Colonic mucosa (tissue), 4 donors: ENCODE measurements at regions of chr7 and their contacts with region 1.

Region 1: DNA sequence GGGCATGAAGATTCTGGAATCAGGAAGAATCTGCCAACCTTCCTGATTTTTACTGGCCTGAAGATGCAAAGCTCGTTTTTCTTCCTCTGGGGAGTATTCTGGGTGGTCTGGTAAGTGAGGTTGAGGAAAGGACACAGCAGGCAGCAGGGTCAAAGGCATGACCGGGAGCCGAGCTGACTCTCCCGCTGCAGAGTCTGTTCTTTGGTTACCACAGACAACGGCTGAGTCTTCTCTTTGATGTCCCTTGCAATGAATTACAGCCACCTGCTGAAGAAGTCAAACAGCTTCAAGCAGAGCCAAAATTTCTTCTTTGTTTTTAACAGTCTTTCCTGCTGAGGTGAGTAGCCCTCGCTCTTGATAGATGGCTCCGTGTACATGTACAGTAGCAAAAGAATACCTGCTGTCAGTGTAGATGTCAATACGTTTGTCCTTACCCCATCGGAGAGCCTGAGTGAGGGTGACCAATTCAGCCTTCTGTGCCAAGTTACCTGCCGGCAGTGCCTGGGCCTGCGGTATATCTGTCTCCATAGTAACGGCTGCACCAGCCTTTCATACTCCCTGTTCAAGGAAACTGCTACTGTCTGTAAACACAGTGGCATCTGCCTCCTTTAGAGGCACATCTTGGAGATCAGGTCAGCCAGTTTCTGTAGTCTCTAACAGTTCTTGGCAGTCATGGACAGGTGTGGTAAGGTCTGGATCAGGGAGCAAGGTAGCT is 76.4 kb downstream of the PRR15 start:
- DNase-seq: no peak
- H3K4me3 ChIP-seq: no peak overlapping the region
- H3K27ac ChIP-seq: no peak overlapping the region
- H3K4me1 ChIP-seq: peaks cover 4% of the 10 kb centered on the region
- H3K27me3 ChIP-seq: no peaks in the 10 kb centered on the region
- CTCF ChIP-seq: no peak

Region 2: GRCh38 chr7:29915481-29916215 is 275.6 kb after region 1 on chr7:
- intact Hi-C with region 1: loop called (anchors 5 kb)
- DNase-seq: no peak
- H3K4me3 ChIP-seq: no peak overlapping the region
- H3K27ac ChIP-seq: no peak overlapping the region
- H3K4me1 ChIP-seq: no peaks in the 10 kb centered on the region
- H3K27me3 ChIP-seq: no peaks in the 10 kb centered on the region
- CTCF ChIP-seq: no peak

Region 3: GRCh38 chr7:30062591-30062990 is 422.6 kb after region 1 on chr7:
- intact Hi-C with region 1: loop called (anchors 10 kb)
- DNase-seq: no peak
- H3K4me3 ChIP-seq: no peak overlapping the region
- H3K27ac ChIP-seq: no peak overlapping the region
- H3K4me1 ChIP-seq: no peaks in the 10 kb centered on the region
- H3K27me3 ChIP-seq: no peaks in the 10 kb centered on the region
- CTCF ChIP-seq: peak; percentile 30